ENCODE measurements at regions of chr2 and their contacts with region 1.

Region 1: GRCh38 chr2:186342029-186342428 is 144.0 kb upstream of the ZC3H15 start:
- DNase-seq: no peak
- H3K4me3 ChIP-seq: no peak overlapping the region
- H3K27ac ChIP-seq: no peak overlapping the region
- H3K4me1 ChIP-seq: peaks cover 3% of the 10 kb centered on the region
- H3K27me3 ChIP-seq: no peaks in the 10 kb centered on the region
- CTCF ChIP-seq: no peak

Region 2: DNA sequence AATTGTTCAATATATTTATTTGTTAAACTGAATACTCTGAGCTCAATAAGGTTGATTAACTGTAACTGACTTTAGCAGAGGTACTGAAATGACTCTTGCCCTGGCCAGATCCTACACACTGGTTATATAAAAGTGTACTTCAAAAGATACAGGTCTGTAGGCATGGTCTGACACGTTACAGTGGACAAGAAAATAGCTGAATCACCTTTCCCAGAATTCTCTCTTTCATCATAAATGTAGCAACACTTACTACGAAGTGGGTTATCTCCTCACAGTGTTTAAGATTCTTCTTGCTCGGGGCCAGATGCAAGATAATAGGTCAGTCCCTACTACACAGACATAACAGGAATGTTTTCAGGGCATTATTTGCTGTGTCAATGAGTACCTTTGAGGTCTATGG is 37.0 kb after region 1 on chr2:
- intact Hi-C with region 1: loop called (anchors 2 kb)
- DNase-seq: no peak
- H3K4me3 ChIP-seq: no peak overlapping the region
- H3K27ac ChIP-seq: no peak overlapping the region
- H3K4me1 ChIP-seq: no peaks in the 10 kb centered on the region
- H3K27me3 ChIP-seq: no peaks in the 10 kb centered on the region
- CTCF ChIP-seq: no peak

Region 3: GRCh38 chr2:186751790-186752189 is 409.8 kb after region 1 on chr2:
- intact Hi-C with region 1: no loop called
- DNase-seq: no peak
- H3K4me3 ChIP-seq: no peak overlapping the region
- H3K27ac ChIP-seq: no peak overlapping the region
- H3K4me1 ChIP-seq: no peaks in the 10 kb centered on the region
- H3K27me3 ChIP-seq: no peaks in the 10 kb centered on the region
- CTCF ChIP-seq: no peak